ENCODE measurements at regions of chr14 and their contacts with region 1.

Region 1: GRCh38 chr14:77707724-77708408 is at the starts of genes ALKBH1 and SLIRP:
- DNase-seq: peak; percentile 72
- ATAC-seq: peak; percentile 96
- H3K4me3 ChIP-seq: peak within 1 kb of the TSS; percentile 94
- H3K27ac ChIP-seq: peak within 1 kb of the TSS; percentile 76
- H3K4me1 ChIP-seq: no peaks in the 10 kb centered on the region; the same call in 1 of the 2 replicates
- H3K27me3 ChIP-seq: no peaks in the 10 kb centered on the region
- CTCF ChIP-seq: no peak
- POLR2A ChIP-seq: peak; percentile 84
- RAD21 ChIP-seq: no peak
- total RNA-seq, gene ALKBH1: 9.2 and 10.8 TPM in 2 replicates
- total RNA-seq, gene SLIRP: 226 and 309 TPM in 2 replicates

Region 2: GRCh38 chr14:77133720-77134338 is 574.0 kb before region 1 on chr14:
- CTCF ChIA-PET with region 1: no interaction called
- POLR2A ChIA-PET with region 1: interaction called, 15 read pairs
- dilution Hi-C with region 1: no loop called
- in situ Hi-C with region 1: no loop called
- intact Hi-C with region 1: no loop called
- DNase-seq: peak; percentile 61
- ATAC-seq: peak; percentile 96
- H3K4me3 ChIP-seq: no peak overlapping the region
- H3K27ac ChIP-seq: no peak overlapping the region
- H3K4me1 ChIP-seq: no peaks in the 10 kb centered on the region
- H3K27me3 ChIP-seq: peaks cover 35% of the 10 kb centered on the region
- CTCF ChIP-seq: no peak
- POLR2A ChIP-seq: no peak
- RAD21 ChIP-seq: no peak

Region 3: DNA sequence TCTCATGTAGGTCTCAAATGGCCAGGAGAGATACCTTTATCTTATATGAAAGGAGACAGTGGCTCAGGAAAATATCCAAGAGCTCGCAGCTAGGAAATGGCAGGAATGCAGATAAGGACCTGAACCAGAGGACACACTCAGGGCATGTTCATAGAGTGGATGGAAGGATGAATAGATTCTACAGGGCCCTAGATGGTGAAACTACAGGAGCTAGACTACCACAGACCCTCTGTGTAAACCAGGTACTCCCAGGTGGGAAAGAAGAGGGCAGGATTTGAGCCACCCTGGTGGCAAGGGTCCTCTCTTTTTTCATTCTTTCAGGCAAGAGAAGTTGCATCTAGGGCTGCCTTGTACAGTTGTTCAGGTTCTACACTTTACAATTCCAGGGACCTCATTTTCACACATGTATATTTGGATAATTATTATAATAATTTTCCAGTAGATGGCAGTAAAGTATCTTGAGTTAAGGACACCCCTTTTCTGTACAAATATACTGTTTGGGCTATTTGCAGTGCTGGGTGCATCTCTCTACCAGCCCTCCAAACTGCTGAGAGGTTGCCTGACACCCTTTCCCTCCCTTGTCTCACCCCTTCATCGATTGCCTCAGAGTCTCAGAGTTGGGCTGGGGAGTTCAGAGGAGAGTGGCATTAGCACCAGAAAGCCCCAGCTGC is 555.8 kb before region 1 on chr14:
- CTCF ChIA-PET with region 1: no interaction called
- POLR2A ChIA-PET with region 1: no interaction called
- dilution Hi-C with region 1: no loop called
- in situ Hi-C with region 1: no loop called
- intact Hi-C with region 1: loop called (anchors 5 kb)
- DNase-seq: peak; percentile 28
- ATAC-seq: peak; percentile 89
- H3K4me3 ChIP-seq: no peak overlapping the region
- H3K27ac ChIP-seq: no peak overlapping the region
- H3K4me1 ChIP-seq: no peaks in the 10 kb centered on the region
- H3K27me3 ChIP-seq: peaks cover 28% of the 10 kb centered on the region
- CTCF ChIP-seq: peak; percentile 39
- POLR2A ChIP-seq: no peak
- RAD21 ChIP-seq: peak; percentile 47

Region 4: DNA sequence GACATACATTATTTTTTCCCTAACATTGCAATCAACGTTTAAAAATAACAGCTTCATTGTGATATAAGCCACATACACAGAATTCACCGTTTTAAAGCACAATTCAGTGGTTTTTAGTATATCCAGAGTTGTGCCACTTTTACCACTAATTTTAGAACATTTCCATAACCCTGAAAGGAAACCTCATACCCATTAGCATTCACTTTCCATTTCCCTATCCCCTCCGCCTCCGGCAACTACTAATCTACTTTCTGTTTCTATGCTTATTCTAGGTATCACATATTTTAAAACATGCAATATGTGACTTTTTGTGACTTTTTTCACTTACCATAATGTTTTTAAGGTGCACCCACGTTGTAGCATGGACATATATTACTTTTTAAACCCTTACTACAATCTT is 153.7 kb before region 1 on chr14:
- CTCF ChIA-PET with region 1: no interaction called
- POLR2A ChIA-PET with region 1: no interaction called
- dilution Hi-C with region 1: no loop called
- in situ Hi-C with region 1: no loop called
- intact Hi-C with region 1: loop called (anchors 5 kb)
- DNase-seq: no peak
- ATAC-seq: no peak
- H3K4me3 ChIP-seq: no peak overlapping the region
- H3K27ac ChIP-seq: no peak overlapping the region
- H3K4me1 ChIP-seq: no peaks in the 10 kb centered on the region
- H3K27me3 ChIP-seq: no peaks in the 10 kb centered on the region
- CTCF ChIP-seq: no peak
- POLR2A ChIP-seq: no peak
- RAD21 ChIP-seq: no peak

Region 5: GRCh38 chr14:77616454-77617229 is 91.2 kb before region 1 on chr14 and contains the start of gene SPTLC2:
- CTCF ChIA-PET with region 1: interaction called, 4 read pairs
- POLR2A ChIA-PET with region 1: no interaction called
- dilution Hi-C with region 1: no loop called
- in situ Hi-C with region 1: no loop called
- intact Hi-C with region 1: loop called (anchors 1 kb)
- DNase-seq: peak; percentile 99
- ATAC-seq: peak; percentile 96
- H3K4me3 ChIP-seq: peak within 1 kb of the TSS; percentile 95
- H3K27ac ChIP-seq: peak within 1 kb of the TSS; percentile 69
- H3K4me1 ChIP-seq: no peaks in the 10 kb centered on the region
- H3K27me3 ChIP-seq: no peaks in the 10 kb centered on the region
- CTCF ChIP-seq: 0 out of 2 replicates have a peak, but pooled peaks have one; percentile 15
- POLR2A ChIP-seq: peak; percentile 84
- RAD21 ChIP-seq: no peak
- total RNA-seq, gene SPTLC2: 68.3 and 100.0 TPM in 2 replicates

Region 6: DNA sequence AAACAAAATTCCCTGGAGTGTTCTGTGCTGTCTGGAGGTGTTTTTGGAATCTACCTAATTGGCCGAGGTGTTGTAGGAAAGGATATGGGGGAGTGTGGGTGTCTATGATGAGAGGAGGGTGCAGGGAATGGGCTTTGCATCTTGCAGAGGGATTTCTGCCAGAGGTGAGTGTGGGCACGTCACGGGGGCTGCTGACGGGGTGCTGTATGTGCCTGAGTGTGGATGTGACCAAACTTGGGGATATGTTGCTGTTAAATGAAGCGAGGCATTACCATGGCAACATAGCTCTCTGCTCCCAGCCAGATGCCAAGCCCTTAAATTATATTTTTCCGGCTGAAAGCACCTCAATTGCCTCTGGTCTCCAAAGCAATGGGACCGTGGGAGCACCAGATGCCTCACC is 47.1 kb before region 1 on chr14:
- CTCF ChIA-PET with region 1: no interaction called
- POLR2A ChIA-PET with region 1: no interaction called
- dilution Hi-C with region 1: no loop called
- in situ Hi-C with region 1: no loop called
- intact Hi-C with region 1: loop called (anchors 1 kb)
- DNase-seq: no peak
- ATAC-seq: no peak
- H3K4me3 ChIP-seq: no peak overlapping the region
- H3K27ac ChIP-seq: no peak overlapping the region
- H3K4me1 ChIP-seq: peaks cover 8% of the 10 kb centered on the region
- H3K27me3 ChIP-seq: no peaks in the 10 kb centered on the region
- CTCF ChIP-seq: no peak
- POLR2A ChIP-seq: no peak
- RAD21 ChIP-seq: no peak

Measured in IMR-90 (cell line).